Ovary (tissue), 10 donors: ENCODE measurements at regions of chr11 and their contacts with region 1.

Region 1: DNA sequence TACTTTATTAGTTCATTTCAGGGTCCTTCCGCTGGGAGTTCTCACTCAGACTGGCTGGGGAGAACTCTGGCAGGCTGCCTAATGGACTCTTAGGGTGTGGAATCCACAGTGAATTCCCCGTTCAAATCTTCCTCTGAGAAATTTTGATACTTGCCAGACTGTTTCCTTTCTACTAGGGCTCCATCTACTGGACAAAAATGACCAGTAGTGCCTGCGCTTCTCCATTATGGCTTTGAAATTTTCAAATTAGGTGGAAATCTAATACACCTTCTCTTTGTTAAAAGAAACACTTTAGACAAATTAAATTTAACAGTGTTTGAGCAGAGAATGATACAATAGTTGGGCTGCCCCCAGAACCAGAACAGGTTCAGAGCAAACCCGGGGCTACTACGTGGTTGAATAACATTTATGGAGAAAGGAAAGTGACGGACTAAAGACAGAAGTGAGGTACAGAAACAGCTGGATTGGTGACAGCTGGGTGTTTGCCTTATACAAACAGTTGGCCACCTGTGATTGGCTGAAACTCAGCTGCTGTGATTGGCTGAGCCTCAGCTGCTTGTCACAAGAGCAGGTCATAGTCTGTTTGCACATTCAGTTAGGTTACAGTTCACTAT is 52.9 kb upstream of the FDX1 start:
- DNase-seq: peak; percentile 74 to 89 (median 82)
- H3K4me3 ChIP-seq: no peak overlapping the region
- H3K27ac ChIP-seq: no peak overlapping the region
- H3K4me1 ChIP-seq: peaks cover 6% of the 10 kb centered on the region
- H3K27me3 ChIP-seq: no peaks in the 10 kb centered on the region
- CTCF ChIP-seq: peak; percentile 65 to 77 (median 73)
- EP300 ChIP-seq: no peak
- POLR2A ChIP-seq: no peak

Region 2: GRCh38 chr11:109267293-109268095 is 1109.3 kb before region 1 on chr11:
- intact Hi-C with region 1: no loop called
- DNase-seq: no peak
- H3K4me3 ChIP-seq: no peak overlapping the region
- H3K27ac ChIP-seq: no peak overlapping the region
- H3K4me1 ChIP-seq: no peaks in the 10 kb centered on the region
- H3K27me3 ChIP-seq: no peaks in the 10 kb centered on the region
- CTCF ChIP-seq: no peak
- EP300 ChIP-seq: no peak
- POLR2A ChIP-seq: no peak

Region 3: GRCh38 chr11:109946322-109946846 is 430.4 kb before region 1 on chr11:
- intact Hi-C with region 1: loop called in 2 of 4 experiments (anchors 10 kb)
- DNase-seq: peak; percentile 79 to 92 (median 85)
- H3K4me3 ChIP-seq: no peak overlapping the region
- H3K27ac ChIP-seq: peak overlapping the region in 1 of 2 donors; percentile 14
- H3K4me1 ChIP-seq: no peaks in the 10 kb centered on the region
- H3K27me3 ChIP-seq: no peaks in the 10 kb centered on the region
- CTCF ChIP-seq: peak; percentile 79 to 88 (median 88)
- EP300 ChIP-seq: no peak
- POLR2A ChIP-seq: peak; percentile 17

Region 4: GRCh38 chr11:109956124-109956793 is 420.6 kb before region 1 on chr11:
- intact Hi-C with region 1: loop called in 1 of 4 experiments (anchors 10 kb)
- DNase-seq: no peak
- H3K4me3 ChIP-seq: no peak overlapping the region
- H3K27ac ChIP-seq: no peak overlapping the region
- H3K4me1 ChIP-seq: peaks cover 4% of the 10 kb centered on the region
- H3K27me3 ChIP-seq: no peaks in the 10 kb centered on the region
- CTCF ChIP-seq: no peak
- EP300 ChIP-seq: no peak
- POLR2A ChIP-seq: no peak

Region 5: DNA sequence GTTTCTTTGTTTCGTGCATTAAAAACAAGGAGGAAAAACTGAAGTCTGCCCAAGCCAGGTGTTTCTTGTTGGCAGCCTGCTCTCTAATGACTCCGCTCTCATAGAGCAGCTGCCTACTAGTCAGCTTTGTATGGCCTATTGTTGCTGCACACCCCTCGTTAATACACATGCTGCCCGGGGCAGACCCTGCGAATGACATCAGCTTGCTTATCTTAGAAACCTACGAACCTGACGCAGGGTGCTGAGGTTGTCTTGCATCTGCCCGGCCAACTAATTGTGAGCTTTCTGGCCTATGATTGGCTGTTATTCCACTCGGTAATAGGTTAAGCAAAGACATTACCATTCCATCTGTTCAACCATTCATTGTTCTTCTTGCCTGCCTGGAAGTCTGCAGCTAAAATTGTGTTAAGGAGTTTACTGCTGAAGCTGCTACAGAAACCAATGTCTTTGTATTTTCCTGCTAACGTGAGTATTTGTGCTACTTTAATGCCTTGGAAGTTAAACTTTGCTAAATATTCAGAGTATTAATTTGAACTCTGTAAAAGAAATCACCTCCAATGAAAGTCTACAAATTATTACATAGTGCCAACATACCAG is 246.1 kb before region 1 on chr11:
- intact Hi-C with region 1: no loop called
- DNase-seq: no peak
- H3K4me3 ChIP-seq: no peak overlapping the region
- H3K27ac ChIP-seq: no peak overlapping the region
- H3K4me1 ChIP-seq: peaks cover 3% of the 10 kb centered on the region
- H3K27me3 ChIP-seq: no peaks in the 10 kb centered on the region
- CTCF ChIP-seq: no peak
- EP300 ChIP-seq: no peak
- POLR2A ChIP-seq: no peak

Region 6: DNA sequence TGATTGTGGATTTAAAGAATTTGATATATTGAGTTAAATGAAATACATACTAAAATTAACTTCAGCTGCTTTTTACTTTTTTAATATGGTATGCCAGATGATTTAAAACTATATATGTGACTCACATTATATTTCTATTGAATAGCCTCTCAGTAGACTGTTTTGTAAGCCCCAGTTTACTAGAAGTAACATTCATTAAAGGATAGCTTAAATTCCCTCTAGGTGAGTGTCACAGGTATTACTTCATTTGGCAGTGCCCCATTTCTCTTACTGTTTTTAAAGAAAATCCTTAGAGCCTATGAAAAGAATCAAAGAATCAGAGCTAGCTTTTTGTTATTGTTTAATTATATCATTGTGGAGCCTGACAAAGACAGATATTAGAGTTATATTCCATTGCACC is 235.0 kb before region 1 on chr11:
- intact Hi-C with region 1: no loop called
- DNase-seq: no peak
- H3K4me3 ChIP-seq: no peak overlapping the region
- H3K27ac ChIP-seq: no peak overlapping the region
- H3K4me1 ChIP-seq: no peaks in the 10 kb centered on the region
- H3K27me3 ChIP-seq: no peaks in the 10 kb centered on the region
- CTCF ChIP-seq: no peak
- EP300 ChIP-seq: no peak
- POLR2A ChIP-seq: no peak

Region 7: DNA sequence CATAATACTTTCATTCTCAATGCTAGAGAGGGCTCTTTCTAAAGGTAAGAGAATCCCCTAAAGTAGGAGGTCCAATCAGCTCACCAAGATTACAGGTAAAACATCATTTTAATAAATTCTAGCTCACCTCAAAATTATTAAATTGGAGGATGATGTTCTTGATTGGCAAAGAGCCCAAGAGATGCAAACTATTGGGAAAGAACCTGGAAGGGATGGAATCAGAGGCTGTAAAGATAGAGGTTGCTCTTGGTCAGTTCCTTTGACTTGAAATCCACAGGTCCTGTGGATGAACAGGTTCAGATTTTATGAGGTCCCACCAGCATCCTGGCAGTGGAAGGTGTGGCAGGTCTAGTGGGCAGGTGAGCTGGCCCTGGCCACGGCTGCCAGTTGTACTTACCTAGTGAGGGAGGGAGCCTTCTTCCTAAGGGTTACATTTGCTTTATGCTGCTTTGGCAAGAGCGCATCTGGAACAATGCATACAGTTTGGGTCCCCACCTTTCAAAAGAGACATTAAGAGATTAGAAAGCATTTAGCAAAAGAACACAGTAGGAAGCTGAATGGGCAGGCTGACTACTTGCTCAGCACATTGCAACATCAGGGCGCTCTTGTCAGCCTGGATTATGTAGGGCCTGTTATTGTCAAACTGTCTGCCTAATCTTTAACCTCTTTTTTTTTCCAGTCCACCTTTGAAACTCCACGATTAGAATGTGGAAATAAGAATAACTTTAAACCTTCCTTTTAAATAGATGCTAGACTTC is 177.5 kb before region 1 on chr11:
- intact Hi-C with region 1: loop called in 2 of 4 experiments (anchors 5 kb)
- DNase-seq: no peak
- H3K4me3 ChIP-seq: no peak overlapping the region
- H3K27ac ChIP-seq: no peak overlapping the region
- H3K4me1 ChIP-seq: no peaks in the 10 kb centered on the region
- H3K27me3 ChIP-seq: no peaks in the 10 kb centered on the region
- CTCF ChIP-seq: no peak
- EP300 ChIP-seq: no peak
- POLR2A ChIP-seq: no peak

Region 8: DNA sequence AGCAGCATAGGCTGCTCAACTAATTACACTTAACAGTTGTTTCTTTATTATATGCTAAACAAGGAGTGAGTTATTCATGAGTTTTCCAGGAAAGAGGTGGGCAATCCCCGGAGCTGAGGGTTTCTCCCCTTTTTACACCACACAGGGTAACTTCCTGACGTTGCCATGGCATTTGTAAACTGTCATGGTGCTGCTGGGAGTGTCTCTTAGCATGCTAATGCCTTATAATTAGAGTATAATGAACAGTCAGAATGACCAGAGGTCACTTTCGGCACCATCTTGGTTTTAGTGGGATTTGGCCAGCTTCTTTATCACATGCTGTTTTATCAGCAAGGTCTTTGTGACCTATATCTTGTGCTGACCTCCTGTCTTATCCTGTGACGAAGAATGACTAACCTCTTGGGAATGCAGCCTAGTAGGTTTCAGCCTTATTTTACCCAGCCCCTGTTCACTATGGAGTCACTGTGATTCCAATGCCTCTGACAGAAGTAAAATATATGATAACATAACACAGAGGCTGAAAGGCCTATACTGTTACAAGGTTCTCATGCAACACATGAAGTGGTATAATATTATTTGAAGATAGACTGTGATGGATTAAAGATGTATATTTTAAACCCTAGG is 39.1 kb before region 1 on chr11:
- intact Hi-C with region 1: no loop called
- DNase-seq: no peak
- H3K4me3 ChIP-seq: no peak overlapping the region
- H3K27ac ChIP-seq: no peak overlapping the region
- H3K4me1 ChIP-seq: peaks cover 2% of the 10 kb centered on the region
- H3K27me3 ChIP-seq: no peaks in the 10 kb centered on the region
- CTCF ChIP-seq: no peak
- EP300 ChIP-seq: no peak
- POLR2A ChIP-seq: no peak